Activated B cell treated with CpG ODN at 0.5 μM for 24 hours (primary cell): ENCODE measurements at regions of chr6 and their contacts with region 1.

Region 1: DNA sequence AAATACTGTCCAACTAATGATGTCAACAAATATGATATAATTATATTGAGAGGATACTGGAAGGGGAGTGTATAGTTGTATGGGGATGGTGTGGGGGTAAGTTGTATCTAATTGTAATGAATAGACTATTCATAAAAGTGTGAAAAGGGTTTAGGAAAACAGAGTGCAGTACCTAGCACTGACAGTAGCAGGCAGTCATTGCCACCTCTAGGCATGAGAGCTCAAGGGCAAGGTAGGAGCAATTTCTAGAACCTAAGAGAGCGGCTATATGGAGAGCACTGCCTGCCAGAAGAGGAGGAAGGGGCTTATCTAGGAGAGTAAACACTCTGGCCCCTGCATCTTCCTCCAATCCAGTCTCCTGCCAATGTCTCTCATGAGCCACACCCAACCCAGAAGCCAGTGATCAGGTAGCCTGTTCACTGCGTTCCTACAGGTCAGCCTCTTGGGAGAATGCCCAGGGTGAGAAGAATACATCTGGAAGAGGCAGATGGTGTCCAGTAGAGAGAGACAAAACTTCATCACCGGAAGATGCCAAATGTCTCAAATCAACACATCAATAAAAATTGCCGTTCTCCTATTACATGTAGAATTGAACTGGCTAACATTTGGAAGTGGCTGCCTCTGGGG is 200.0 kb downstream of the LY86 start:
- DNase-seq: no peak
- ATAC-seq: peak; percentile 90
- H3K4me3 Mint-ChIP-seq: no peak overlapping the region
- H3K27ac Mint-ChIP-seq: no peak overlapping the region
- H3K4me1 Mint-ChIP-seq: no peaks in the 10 kb centered on the region
- H3K27me3 Mint-ChIP-seq: no peaks in the 10 kb centered on the region
- CTCF ChIP-seq: no peak

Region 2: DNA sequence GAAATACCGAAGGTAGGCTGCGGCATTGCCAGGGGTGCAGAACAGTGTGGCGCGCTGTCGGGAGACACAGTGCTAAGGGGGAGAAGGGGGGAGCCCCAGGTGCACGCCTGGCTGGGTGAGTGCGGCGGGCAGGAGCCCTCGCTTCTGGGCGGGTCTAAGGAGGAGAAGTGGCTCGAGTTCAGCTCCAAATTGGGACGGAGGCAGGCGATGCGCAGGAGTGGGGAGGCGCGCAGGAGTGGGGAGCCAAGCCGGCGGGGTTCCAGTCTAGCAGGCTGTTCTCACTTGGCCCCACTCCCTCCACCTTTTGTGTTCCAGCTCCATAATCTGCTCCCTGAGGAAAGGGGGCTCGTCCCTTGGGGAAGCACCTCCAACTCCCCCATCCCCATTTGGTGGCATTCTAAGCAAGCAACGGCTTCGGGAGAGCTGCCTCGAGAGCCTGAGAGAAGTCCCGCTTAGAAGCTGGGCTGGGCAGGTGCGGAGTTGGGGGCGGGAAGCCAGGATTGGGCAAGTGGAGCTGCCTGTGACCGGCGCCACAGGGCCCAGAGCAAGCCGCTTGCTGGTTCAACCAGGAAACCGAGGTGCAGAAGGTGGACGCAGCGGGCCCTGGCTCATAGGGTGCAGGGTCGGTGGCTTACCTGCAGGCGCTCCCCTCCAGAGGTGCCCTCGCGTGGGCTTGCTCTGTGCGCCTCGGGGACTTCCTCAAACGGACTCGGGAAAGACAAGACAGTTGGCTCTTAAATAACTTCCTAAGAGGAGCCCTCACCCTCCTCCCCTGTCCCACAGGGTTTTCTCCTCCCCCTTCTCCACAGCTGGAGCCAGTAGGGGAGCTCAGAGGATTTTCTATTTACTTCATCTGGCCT is 468.3 kb before region 1 on chr6 and contains the start of gene F13A1:
- CTCF ChIA-PET with region 1: no interaction called
- POLR2A ChIA-PET with region 1: no interaction called
- intact Hi-C with region 1: no loop called
- DNase-seq: peak; percentile 32
- ATAC-seq: peak; percentile 89
- H3K4me3 Mint-ChIP-seq: peak within 1 kb of the TSS; percentile 70
- H3K27ac Mint-ChIP-seq: no peak within 1 kb of the TSS
- H3K4me1 Mint-ChIP-seq: peaks cover 22% of the 10 kb centered on the region
- H3K27me3 Mint-ChIP-seq: peaks cover 47% of the 10 kb centered on the region
- CTCF ChIP-seq: no peak
- total RNA-seq, gene F13A1: 0.69 and 0.75 TPM in 2 replicates

Region 3: GRCh38 chr6:7188492-7188891 is 400.0 kb after region 1 on chr6:
- CTCF ChIA-PET with region 1: no interaction called
- POLR2A ChIA-PET with region 1: no interaction called
- intact Hi-C with region 1: loop called (anchors 1 kb)
- DNase-seq: no peak
- ATAC-seq: peak; percentile 97
- H3K4me3 Mint-ChIP-seq: peak overlapping the region; percentile 45
- H3K27ac Mint-ChIP-seq: peak overlapping the region; percentile 72
- H3K4me1 Mint-ChIP-seq: peaks cover 21% of the 10 kb centered on the region
- H3K27me3 Mint-ChIP-seq: no peaks in the 10 kb centered on the region
- CTCF ChIP-seq: no peak